Activated B cell treated with CpG ODN at 0.5 μM for 24 hours (primary cell): ENCODE measurements at regions of chr5 and their contacts with region 1.

Region 1: DNA sequence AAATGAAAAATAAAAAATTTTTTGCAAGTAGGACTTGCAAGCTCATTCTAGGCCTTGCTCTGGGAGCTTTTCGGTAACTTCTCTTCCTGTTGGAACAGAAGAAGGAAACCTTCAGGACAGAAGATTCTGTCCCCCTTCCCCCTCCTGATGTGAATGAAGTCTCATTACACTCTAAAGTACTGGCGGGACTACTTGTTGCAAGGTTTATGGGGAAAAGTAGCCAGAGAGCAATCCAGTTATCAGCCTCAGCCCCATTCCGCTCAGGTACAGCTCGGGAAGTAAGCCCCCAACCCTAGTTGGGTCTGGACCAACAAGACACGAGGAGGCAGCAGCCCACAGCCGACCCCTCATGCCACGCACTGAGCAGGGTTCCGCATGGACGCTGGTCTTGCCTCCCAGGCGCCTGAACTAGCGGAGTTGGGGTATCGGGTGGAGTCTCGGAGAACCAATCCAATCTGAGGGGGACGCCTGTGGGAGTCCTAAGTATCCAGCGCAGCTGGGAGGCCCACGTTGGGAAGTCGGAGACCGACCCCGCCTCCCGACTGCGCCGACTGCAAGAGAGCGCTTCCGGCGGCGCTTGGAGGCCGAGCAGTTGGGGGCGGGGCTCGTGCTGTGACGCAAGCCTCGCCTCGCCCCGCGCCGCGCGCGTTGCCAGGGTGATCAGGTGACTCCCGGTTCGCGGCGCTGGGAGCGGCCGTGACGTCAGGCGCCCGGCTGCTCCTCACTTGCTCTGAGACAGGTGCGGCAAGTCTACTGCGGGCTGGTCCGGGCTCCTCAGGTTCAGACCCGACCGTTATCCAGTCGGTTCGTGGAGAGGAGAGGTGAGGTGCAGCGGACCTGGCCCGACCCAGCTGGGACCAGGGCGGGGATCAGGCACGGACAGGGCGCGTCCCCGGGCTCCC is at the start of gene CYSTM1:
- DNase-seq: peak; percentile 96
- ATAC-seq: peak; percentile 83
- H3K4me3 Mint-ChIP-seq: peak within 1 kb of the TSS; percentile 93
- H3K27ac Mint-ChIP-seq: peak within 1 kb of the TSS; percentile 89
- H3K4me1 Mint-ChIP-seq: peaks cover 15% of the 10 kb centered on the region
- H3K27me3 Mint-ChIP-seq: no peaks in the 10 kb centered on the region
- CTCF ChIP-seq: no peak
- total RNA-seq, gene CYSTM1: 20.1 and 23.3 TPM in 2 replicates

Region 2: GRCh38 chr5:139293504-139294373 is 881.0 kb before region 1 on chr5 and contains the start of gene MATR3:
- CTCF ChIA-PET with region 1: no interaction called
- POLR2A ChIA-PET with region 1: no interaction called
- intact Hi-C with region 1: loop called (anchors 5 kb)
- DNase-seq: peak; percentile 87
- ATAC-seq: peak; percentile 90
- H3K4me3 Mint-ChIP-seq: peak within 1 kb of the TSS; percentile 97
- H3K27ac Mint-ChIP-seq: peak within 1 kb of the TSS; percentile 96
- H3K4me1 Mint-ChIP-seq: peaks cover 48% of the 10 kb centered on the region
- H3K27me3 Mint-ChIP-seq: no peaks in the 10 kb centered on the region
- CTCF ChIP-seq: no peak
- total RNA-seq, gene MATR3: 242 and 294 TPM in 2 replicates

Region 3: GRCh38 chr5:140107312-140108083 is 67.2 kb before region 1 on chr5:
- CTCF ChIA-PET with region 1: no interaction called
- POLR2A ChIA-PET with region 1: interaction called, 15 read pairs
- intact Hi-C with region 1: loop called (anchors 2 kb)
- DNase-seq: peak; percentile 92
- ATAC-seq: peak; percentile 89
- H3K4me3 Mint-ChIP-seq: peak overlapping the region; percentile 98
- H3K27ac Mint-ChIP-seq: peak overlapping the region; percentile 97
- H3K4me1 Mint-ChIP-seq: peaks cover 44% of the 10 kb centered on the region
- H3K27me3 Mint-ChIP-seq: peaks cover 15% of the 10 kb centered on the region
- CTCF ChIP-seq: no peak

Region 4: DNA sequence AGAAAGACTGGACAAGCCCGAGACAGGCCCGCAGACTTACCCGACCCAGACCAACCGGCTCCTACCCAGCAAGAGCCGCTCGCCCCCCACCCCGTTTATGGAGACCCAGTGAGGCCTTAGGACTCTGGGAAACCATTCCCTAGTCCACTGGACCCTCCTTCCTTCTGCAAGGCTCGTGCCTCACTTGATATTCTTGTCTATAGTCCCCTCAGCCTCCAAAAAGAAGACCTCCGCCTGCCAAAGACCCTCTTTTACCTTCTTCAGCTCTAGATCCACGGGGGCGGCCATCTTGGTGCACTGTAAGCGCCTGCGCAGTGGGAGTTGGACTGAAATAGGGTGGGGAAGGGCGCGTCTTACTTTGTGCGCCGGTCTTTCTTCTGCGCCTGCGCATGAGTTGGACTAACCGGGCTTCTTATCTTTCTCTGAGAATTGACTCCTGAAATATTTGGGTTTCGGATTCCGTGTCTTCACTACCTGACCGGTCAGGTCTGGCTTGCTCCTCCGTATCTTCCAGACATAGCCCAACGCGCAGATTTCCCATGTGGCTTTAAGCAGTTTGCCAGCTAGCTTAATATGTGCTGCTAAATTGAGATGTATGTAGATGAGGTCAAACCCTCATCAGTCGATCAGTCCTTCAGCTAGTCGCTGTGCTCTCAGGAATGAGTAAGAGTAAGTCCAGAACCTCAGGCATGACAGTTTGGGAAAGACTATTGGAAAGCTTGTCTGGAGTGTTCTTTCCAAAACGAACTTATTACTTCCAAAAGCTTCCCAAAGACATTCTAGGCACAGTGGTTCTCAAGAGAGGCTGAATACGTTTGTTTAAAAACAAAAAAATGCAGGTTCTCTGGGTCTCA is 128.3 kb after region 1 on chr5 and contains the start of gene PFDN1:
- CTCF ChIA-PET with region 1: no interaction called
- POLR2A ChIA-PET with region 1: interaction called, 7 read pairs
- intact Hi-C with region 1: loop called (anchors 5 kb)
- DNase-seq: peak; percentile 76
- ATAC-seq: peak; percentile 99
- H3K4me3 Mint-ChIP-seq: peak within 1 kb of the TSS; percentile 99
- H3K27ac Mint-ChIP-seq: peak within 1 kb of the TSS; percentile 97
- H3K4me1 Mint-ChIP-seq: peaks cover 21% of the 10 kb centered on the region
- H3K27me3 Mint-ChIP-seq: peaks cover 3% of the 10 kb centered on the region
- CTCF ChIP-seq: no peak
- total RNA-seq, gene PFDN1: 38.2 and 38.4 TPM in 2 replicates

Region 5: DNA sequence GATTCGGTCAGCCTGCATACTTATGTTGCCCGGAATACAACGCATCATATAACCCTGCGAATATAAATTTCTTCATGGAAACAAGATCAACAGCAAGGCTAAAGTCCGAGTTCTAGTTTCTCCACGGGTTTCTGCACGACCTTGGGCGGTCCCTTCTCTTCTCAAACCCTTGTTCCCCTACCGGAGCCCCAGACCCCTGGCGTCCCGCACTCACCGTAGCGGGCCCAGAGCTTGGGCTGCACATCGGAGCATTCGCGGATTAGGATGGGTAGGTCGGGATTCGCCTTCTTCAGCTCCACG is 472.3 kb after region 1 on chr5:
- CTCF ChIA-PET with region 1: no interaction called
- POLR2A ChIA-PET with region 1: no interaction called
- intact Hi-C with region 1: loop called (anchors 10 kb)
- DNase-seq: no peak
- ATAC-seq: no peak
- H3K4me3 Mint-ChIP-seq: peak overlapping the region; percentile 99
- H3K27ac Mint-ChIP-seq: peak overlapping the region; percentile 98
- H3K4me1 Mint-ChIP-seq: peaks cover 38% of the 10 kb centered on the region
- H3K27me3 Mint-ChIP-seq: no peaks in the 10 kb centered on the region
- CTCF ChIP-seq: no peak

Region 6: DNA sequence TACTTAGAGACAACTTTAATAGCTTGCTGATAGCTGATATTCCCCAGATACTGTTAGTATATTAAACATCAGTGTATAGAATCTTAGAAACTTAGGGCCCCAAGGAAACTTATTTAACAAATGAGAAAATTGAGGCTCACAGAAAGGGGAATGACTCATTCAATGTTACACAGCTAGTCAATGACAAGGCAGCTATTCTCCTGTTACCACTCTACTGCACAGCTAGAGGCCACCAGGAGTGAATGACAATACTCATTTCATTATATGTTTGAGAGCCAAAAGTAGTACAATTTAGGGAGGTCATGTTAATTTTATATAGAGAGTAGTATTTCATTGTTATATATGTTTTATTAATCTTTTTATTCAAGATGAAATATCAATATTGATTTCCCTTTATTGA is 843.2 kb after region 1 on chr5:
- CTCF ChIA-PET with region 1: no interaction called
- POLR2A ChIA-PET with region 1: no interaction called
- intact Hi-C with region 1: no loop called
- DNase-seq: no peak
- ATAC-seq: no peak
- H3K4me3 Mint-ChIP-seq: no peak overlapping the region
- H3K27ac Mint-ChIP-seq: no peak overlapping the region
- H3K4me1 Mint-ChIP-seq: no peaks in the 10 kb centered on the region
- H3K27me3 Mint-ChIP-seq: no peaks in the 10 kb centered on the region
- CTCF ChIP-seq: no peak